ENCODE measurements at regions of chr15 and their contacts with region 1.

Region 1: GRCh38 chr15:29538044-29538443 is 268.4 kb upstream of the NSMCE3 start:
- DNase-seq: no peak
- ATAC-seq: no peak
- H3K4me3 ChIP-seq: no peak overlapping the region
- H3K27ac ChIP-seq: no peak overlapping the region
- H3K4me1 ChIP-seq: no peaks in the 10 kb centered on the region
- H3K27me3 ChIP-seq: peaks cover 74% of the 10 kb centered on the region
- CTCF ChIP-seq: no peak

Region 2: DNA sequence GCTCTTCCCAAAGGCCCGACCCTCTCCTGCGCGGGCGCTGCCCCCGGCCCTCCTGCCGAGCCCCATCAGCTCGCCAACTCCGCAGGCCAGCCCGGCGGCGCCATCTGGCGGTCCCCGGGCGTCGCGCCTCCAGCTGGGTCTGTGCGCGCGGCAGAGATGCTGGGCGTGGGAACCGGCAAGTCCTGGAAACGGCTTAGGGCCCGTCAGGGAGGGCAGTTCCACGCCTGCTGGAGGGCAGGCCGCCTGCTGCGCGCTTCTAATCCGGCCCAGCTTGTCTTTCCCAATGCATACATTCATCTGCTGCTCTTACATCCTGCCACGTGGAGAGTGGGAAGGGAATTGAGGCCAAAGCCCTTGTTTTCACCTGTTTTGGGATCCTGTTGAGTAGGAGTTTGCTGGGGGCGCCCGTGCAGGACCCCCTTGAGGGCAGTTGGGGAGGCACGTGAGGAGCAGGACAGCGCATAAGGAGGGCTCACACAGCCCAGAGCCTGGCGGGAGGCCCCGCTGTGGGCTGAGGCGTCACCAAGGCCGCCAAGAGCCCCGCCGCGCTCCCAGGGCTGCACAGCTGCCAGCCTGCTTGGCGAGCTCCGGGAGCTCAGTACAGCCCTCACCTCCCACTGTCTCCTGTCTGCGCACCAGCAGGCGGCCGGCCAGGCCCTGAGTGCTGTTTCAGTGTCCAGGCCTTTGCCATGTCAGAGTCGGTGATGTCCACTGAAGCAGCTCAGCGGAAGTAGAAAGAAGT is 434.0 kb before region 1 on chr15:
- CTCF ChIA-PET with region 1: interaction called, 12 read pairs
- POLR2A ChIA-PET with region 1: no interaction called
- intact Hi-C with region 1: no loop called
- DNase-seq: peak; percentile 43
- ATAC-seq: peak; percentile 78
- H3K4me3 ChIP-seq: no peak overlapping the region
- H3K27ac ChIP-seq: no peak overlapping the region
- H3K4me1 ChIP-seq: no peaks in the 10 kb centered on the region
- H3K27me3 ChIP-seq: no peaks in the 10 kb centered on the region
- CTCF ChIP-seq: peak; percentile 59

Region 3: GRCh38 chr15:29623116-29623639 is 85.1 kb after region 1 on chr15:
- CTCF ChIA-PET with region 1: no interaction called
- POLR2A ChIA-PET with region 1: no interaction called
- intact Hi-C with region 1: no loop called
- DNase-seq: no peak
- ATAC-seq: no peak
- H3K4me3 ChIP-seq: no peak overlapping the region
- H3K27ac ChIP-seq: no peak overlapping the region
- H3K4me1 ChIP-seq: no peaks in the 10 kb centered on the region
- H3K27me3 ChIP-seq: peaks cover 18% of the 10 kb centered on the region
- CTCF ChIP-seq: no peak

Measured in PC-3 (cell line).